CD8-positive, alpha-beta T cell (primary cell): ENCODE measurements at regions of chr3 and their contacts with region 1.

Region 1: DNA sequence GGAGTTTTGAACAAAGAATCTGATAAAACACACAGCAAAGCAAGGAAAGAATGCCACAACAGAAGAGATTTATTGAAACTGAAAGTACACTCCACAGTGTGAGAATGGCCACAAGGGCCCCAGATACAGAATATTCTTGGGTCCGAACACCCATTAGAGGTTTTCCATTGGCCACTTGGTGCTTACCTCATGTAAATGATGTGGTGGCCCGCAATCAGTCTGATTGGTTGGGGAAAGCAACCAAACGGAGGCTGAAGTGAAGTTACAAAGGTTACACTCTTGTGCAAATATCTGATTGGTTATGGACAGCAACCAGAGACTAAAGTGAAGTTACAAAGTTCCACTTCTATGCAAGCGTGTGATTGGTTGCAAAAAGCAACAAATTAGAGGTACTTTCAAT is 20.4 kb downstream of the NSUN3 start:
- DNase-seq: no peak
- ATAC-seq: no peak
- H3K4me3 ChIP-seq: no peak overlapping the region
- H3K4me3 Mint-ChIP-seq: no peak overlapping the region
- H3K27ac ChIP-seq: no peak overlapping the region
- H3K27ac Mint-ChIP-seq: no peak overlapping the region
- H3K4me1 ChIP-seq: peaks cover 13% of the 10 kb centered on the region
- H3K4me1 Mint-ChIP-seq: peaks cover 49% of the 10 kb centered on the region
- H3K27me3 ChIP-seq: no peaks in the 10 kb centered on the region
- H3K27me3 Mint-ChIP-seq: no peaks in the 10 kb centered on the region
- CTCF ChIP-seq: no peak

Region 2: DNA sequence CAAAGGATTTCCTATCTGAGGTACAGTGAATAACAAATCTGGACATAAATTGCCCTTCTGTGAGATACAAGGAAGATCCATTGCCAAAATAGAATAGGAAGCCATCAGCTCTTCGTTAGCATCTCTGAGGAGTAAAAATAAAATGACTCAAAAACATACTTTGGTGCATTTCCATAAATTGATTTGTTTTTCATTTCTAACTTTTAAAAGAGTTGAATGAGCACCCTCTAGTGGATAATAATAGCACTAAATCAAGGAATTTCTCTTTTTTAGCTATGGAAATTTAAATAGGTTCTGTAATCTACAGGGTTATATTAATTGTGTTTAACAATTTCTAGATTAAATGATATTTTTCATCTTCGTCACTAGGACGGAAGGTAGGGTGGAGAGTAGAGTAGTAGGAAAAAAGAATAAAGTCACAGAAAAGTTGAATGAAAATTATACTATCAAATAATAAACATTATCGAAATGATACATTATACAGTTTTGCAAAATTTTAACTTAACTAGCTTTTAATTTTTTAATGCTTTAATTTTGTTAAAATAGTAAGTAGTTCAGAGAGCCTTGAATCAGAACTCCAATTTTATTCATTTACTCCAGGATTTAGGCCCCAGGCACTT is 14.0 kb before region 1 on chr3:
- CTCF ChIA-PET with region 1: interaction called, 14 read pairs
- POLR2A ChIA-PET with region 1: interaction called, 3 read pairs
- intact Hi-C with region 1: no loop called
- DNase-seq: peak in 1 of 9 experiments; percentile 42
- ATAC-seq: peak; percentile 17
- H3K4me3 ChIP-seq: no peak overlapping the region
- H3K4me3 Mint-ChIP-seq: no peak overlapping the region
- H3K27ac ChIP-seq: no peak overlapping the region
- H3K27ac Mint-ChIP-seq: peak overlapping the region; percentile 5
- H3K4me1 ChIP-seq: peaks cover 9% of the 10 kb centered on the region
- H3K4me1 Mint-ChIP-seq: peaks cover 74% of the 10 kb centered on the region
- H3K27me3 ChIP-seq: no peaks in the 10 kb centered on the region
- H3K27me3 Mint-ChIP-seq: no peaks in the 10 kb centered on the region
- CTCF ChIP-seq: peak; percentile 82